ENCODE measurements at regions of chr6 and their contacts with region 1.

Region 1: GRCh38 chr6:7561153-7561964 is 19.9 kb downstream of the DSP start:
- DNase-seq: peak; percentile 95 to 97
- H3K4me3 ChIP-seq: no peak overlapping the region
- H3K4me3 Mint-ChIP-seq: peak overlapping the region; percentile 68
- H3K27ac Mint-ChIP-seq: peak overlapping the region; percentile 94
- H3K4me1 ChIP-seq: peaks cover 40% of the 10 kb centered on the region
- H3K4me1 Mint-ChIP-seq: peaks cover 30% of the 10 kb centered on the region
- H3K27me3 ChIP-seq: no peaks in the 10 kb centered on the region
- H3K27me3 Mint-ChIP-seq: no peaks in the 10 kb centered on the region
- CTCF ChIP-seq: no peak

Region 2: DNA sequence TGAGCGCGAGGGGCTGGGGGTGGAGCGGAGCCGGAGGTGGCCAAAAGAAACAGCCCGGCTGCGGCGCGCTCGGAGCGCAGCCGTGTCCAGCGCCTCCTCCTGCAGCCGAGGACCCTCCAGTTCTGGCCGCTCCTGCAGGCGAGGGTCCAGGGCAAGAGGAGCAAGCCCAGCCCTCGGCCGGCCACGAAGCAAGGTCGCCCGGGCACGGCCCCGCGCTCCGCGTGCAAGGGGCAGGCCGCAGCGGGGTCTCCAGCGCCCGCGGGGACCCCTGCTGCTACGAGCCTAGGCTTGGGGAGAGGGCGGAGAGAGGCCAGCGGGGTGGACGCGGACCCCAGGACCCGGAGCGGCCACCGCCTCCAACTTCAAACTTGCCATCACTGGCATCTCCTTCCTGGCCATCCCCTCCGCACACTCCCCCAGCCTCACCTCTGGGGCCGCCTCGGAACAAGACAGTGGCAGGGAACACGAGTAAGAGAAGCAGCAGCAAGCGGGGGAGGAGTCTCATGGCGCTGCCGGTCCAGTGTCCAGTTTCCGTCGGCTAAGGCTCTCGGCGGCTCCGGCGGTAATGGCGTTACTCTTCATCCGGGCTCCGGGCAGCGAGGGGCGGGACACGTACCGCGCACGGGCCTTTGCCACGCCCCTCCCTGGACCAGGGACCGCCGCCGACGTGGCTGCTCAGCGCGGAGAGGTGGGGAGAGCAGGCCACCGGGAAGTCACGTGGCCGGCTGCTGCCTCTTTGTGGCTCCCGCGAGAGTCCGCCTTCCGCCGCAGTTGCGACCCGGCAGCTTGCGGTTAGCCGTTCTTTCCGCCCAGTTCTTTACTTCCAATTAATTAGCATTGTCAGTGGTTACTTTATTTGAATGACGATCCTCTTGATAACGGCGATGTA is 248.5 kb before region 1 on chr6 and contains the start of gene SSR1:
- CTCF ChIA-PET with region 1: no interaction called
- POLR2A ChIA-PET with region 1: no interaction called
- intact Hi-C with region 1: loop called (anchors 1 kb)
- DNase-seq: peak; percentile 96 to 97
- H3K4me3 ChIP-seq: peak within 1 kb of the TSS; percentile 95
- H3K4me3 Mint-ChIP-seq: peak within 1 kb of the TSS; percentile 87
- H3K27ac Mint-ChIP-seq: peak within 1 kb of the TSS; percentile 76
- H3K4me1 ChIP-seq: peaks cover 16% of the 10 kb centered on the region
- H3K4me1 Mint-ChIP-seq: no peaks in the 10 kb centered on the region
- H3K27me3 ChIP-seq: no peaks in the 10 kb centered on the region
- H3K27me3 Mint-ChIP-seq: no peaks in the 10 kb centered on the region
- CTCF ChIP-seq: no peak
- total RNA-seq, gene SSR1: 136 and 150 TPM in 2 replicates

Region 3: DNA sequence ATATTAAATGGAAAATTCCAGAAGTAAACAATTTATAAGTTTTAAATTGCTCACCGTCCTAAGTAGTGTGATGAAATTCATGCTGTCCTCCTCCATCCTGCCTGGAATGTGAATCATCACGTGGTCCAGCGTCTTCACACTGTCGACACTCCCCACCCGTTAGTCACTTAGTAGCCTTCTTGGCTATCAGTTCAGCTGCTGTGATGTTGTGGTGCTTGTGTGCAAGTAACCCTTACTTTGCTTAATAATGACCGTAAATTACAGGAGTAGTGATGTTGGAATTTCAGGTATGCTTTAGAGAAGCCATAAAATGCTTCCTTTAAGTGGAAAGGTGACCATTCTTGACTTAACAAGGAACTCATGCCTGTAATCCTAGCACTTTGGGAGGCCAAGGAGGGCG is 146.5 kb before region 1 on chr6:
- CTCF ChIA-PET with region 1: no interaction called
- POLR2A ChIA-PET with region 1: no interaction called
- intact Hi-C with region 1: loop called (anchors 1 kb)
- DNase-seq: peak; percentile 86 to 92
- H3K4me3 ChIP-seq: no peak overlapping the region
- H3K4me3 Mint-ChIP-seq: peak overlapping the region; percentile 60
- H3K27ac Mint-ChIP-seq: peak overlapping the region; percentile 90
- H3K4me1 ChIP-seq: peaks cover 58% of the 10 kb centered on the region
- H3K4me1 Mint-ChIP-seq: peaks cover 62% of the 10 kb centered on the region
- H3K27me3 ChIP-seq: no peaks in the 10 kb centered on the region
- H3K27me3 Mint-ChIP-seq: no peaks in the 10 kb centered on the region
- CTCF ChIP-seq: no peak

Region 4: DNA sequence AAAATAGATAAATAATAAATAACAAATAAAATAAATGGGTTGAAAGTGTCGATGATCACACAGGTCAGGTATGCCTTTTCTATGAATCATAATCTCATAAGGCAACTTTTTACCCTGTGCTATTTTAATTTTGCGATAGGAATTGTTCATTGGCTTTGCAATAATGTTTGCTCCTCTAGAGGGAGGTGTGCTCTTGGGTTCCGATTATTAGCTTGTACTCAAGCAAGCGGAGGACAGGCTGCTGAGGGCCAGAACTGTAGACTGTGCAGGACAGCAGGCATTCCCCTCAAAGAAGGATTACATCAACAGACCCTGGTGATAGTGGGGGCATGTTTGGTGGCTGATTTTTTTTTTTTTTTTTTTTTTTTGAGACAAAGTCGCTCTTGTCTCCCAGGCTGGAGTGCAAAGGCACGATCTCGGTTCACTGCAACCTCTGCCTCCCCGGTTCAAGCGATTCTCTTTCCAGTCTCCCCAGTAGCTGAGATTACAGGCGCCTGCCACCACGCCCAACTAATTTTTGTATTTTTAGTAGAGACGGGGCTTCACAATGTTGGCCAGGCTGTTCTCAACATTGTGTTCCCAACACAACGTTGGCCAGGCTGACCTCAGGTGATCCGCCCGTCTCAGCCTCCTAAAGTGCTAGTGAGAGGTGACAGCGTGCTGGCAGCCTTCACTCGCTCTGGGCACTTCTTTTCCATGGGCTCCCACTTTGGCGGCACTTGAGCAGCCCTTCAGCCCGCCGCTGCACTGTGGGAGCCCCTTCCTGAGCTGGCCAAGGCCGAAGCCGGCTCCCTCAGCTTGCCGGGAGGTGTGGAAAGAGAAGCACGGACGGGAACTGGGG is 136.2 kb before region 1 on chr6:
- CTCF ChIA-PET with region 1: interaction called, 6 read pairs
- POLR2A ChIA-PET with region 1: no interaction called
- intact Hi-C with region 1: loop called (anchors 1 kb)
- DNase-seq: peak; percentile 49 to 57
- H3K4me3 ChIP-seq: no peak overlapping the region
- H3K4me3 Mint-ChIP-seq: no peak overlapping the region
- H3K27ac Mint-ChIP-seq: no peak overlapping the region
- H3K4me1 ChIP-seq: peaks cover 8% of the 10 kb centered on the region
- H3K4me1 Mint-ChIP-seq: peaks cover 5% of the 10 kb centered on the region
- H3K27me3 ChIP-seq: no peaks in the 10 kb centered on the region
- H3K27me3 Mint-ChIP-seq: no peaks in the 10 kb centered on the region
- CTCF ChIP-seq: peak; percentile 37 to 54

Region 5: GRCh38 chr6:7463785-7464184 is 97.6 kb before region 1 on chr6:
- CTCF ChIA-PET with region 1: no interaction called
- POLR2A ChIA-PET with region 1: interaction called, 6 read pairs
- intact Hi-C with region 1: loop called (anchors 1 kb)
- DNase-seq: peak; percentile 88 to 92
- H3K4me3 ChIP-seq: no peak overlapping the region
- H3K4me3 Mint-ChIP-seq: no peak overlapping the region
- H3K27ac Mint-ChIP-seq: peak overlapping the region; percentile 93
- H3K4me1 ChIP-seq: peaks cover 71% of the 10 kb centered on the region
- H3K4me1 Mint-ChIP-seq: peaks cover 48% of the 10 kb centered on the region
- H3K27me3 ChIP-seq: no peaks in the 10 kb centered on the region
- H3K27me3 Mint-ChIP-seq: no peaks in the 10 kb centered on the region
- CTCF ChIP-seq: no peak

Region 6: DNA sequence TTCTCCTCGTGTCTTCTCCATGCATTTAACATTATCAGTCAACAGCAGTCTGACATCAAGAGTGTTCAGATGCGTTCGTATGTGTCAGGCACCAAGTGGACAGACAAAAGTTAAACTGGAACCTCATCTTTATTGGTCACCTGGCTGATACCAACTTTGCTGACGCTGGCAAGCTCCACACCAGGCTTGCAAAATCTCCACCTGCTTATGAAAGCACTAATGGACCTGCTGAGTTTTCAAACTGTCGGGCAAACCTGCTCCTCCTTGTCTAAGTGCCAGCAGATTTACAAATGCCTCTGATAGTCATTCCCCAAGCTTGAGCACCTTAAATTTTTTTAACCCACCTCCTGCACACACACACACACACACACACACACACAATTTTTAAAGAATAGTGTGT is 47.8 kb before region 1 on chr6:
- CTCF ChIA-PET with region 1: no interaction called
- POLR2A ChIA-PET with region 1: no interaction called
- intact Hi-C with region 1: no loop called
- DNase-seq: no peak
- H3K4me3 ChIP-seq: no peak overlapping the region
- H3K4me3 Mint-ChIP-seq: no peak overlapping the region
- H3K27ac Mint-ChIP-seq: no peak overlapping the region
- H3K4me1 ChIP-seq: no peaks in the 10 kb centered on the region; the same call in 1 of the 2 replicates
- H3K4me1 Mint-ChIP-seq: peaks cover 6% of the 10 kb centered on the region
- H3K27me3 ChIP-seq: no peaks in the 10 kb centered on the region
- H3K27me3 Mint-ChIP-seq: no peaks in the 10 kb centered on the region
- CTCF ChIP-seq: no peak

Region 7: GRCh38 chr6:7572213-7572958 is 11.0 kb after region 1 on chr6:
- CTCF ChIA-PET with region 1: no interaction called
- POLR2A ChIA-PET with region 1: no interaction called
- intact Hi-C with region 1: no loop called
- DNase-seq: no peak
- H3K4me3 ChIP-seq: no peak overlapping the region
- H3K4me3 Mint-ChIP-seq: no peak overlapping the region
- H3K27ac Mint-ChIP-seq: no peak overlapping the region
- H3K4me1 ChIP-seq: no peaks in the 10 kb centered on the region
- H3K4me1 Mint-ChIP-seq: no peaks in the 10 kb centered on the region
- H3K27me3 ChIP-seq: no peaks in the 10 kb centered on the region
- H3K27me3 Mint-ChIP-seq: no peaks in the 10 kb centered on the region
- CTCF ChIP-seq: no peak

Region 8: DNA sequence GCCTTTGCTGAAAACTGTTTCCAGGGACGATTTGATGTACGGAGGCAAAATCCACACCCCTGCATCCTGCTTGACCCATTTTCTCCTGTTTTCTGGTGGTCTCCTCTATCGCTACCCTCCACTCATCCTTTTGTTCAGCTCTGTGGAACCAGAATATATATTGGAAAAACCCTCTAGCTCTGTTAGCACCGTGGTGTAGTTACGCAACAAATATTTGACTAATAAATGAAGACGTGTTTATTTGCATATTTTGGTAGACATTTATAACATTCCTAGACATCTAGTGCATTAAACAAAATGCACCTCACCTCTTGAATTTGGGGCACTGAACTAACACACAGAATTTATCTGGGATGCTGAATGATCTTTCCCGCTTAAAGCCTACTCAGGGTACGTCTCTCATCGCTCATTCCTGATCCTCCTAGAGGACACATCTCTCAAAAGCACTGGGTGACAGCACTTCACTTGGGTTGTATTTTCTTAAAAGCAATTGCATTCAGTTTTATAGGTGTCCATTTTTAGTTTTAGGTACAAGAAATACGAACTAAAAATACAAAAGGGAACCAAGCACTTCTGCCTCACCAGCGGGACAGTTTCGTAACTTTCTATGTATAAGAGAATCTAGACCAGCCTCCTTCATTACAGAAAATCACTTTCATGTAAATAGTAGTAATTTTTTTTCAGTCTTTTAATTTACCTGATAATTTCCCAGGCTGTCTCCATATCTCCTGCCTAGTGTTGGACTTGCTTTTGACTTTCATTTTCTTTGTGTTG is 87.9 kb after region 1 on chr6:
- CTCF ChIA-PET with region 1: no interaction called
- POLR2A ChIA-PET with region 1: no interaction called
- intact Hi-C with region 1: no loop called
- DNase-seq: no peak
- H3K4me3 ChIP-seq: no peak overlapping the region
- H3K4me3 Mint-ChIP-seq: no peak overlapping the region
- H3K27ac Mint-ChIP-seq: no peak overlapping the region
- H3K4me1 ChIP-seq: no peaks in the 10 kb centered on the region
- H3K4me1 Mint-ChIP-seq: no peaks in the 10 kb centered on the region
- H3K27me3 ChIP-seq: no peaks in the 10 kb centered on the region
- H3K27me3 Mint-ChIP-seq: no peaks in the 10 kb centered on the region
- CTCF ChIP-seq: no peak

Region 9: DNA sequence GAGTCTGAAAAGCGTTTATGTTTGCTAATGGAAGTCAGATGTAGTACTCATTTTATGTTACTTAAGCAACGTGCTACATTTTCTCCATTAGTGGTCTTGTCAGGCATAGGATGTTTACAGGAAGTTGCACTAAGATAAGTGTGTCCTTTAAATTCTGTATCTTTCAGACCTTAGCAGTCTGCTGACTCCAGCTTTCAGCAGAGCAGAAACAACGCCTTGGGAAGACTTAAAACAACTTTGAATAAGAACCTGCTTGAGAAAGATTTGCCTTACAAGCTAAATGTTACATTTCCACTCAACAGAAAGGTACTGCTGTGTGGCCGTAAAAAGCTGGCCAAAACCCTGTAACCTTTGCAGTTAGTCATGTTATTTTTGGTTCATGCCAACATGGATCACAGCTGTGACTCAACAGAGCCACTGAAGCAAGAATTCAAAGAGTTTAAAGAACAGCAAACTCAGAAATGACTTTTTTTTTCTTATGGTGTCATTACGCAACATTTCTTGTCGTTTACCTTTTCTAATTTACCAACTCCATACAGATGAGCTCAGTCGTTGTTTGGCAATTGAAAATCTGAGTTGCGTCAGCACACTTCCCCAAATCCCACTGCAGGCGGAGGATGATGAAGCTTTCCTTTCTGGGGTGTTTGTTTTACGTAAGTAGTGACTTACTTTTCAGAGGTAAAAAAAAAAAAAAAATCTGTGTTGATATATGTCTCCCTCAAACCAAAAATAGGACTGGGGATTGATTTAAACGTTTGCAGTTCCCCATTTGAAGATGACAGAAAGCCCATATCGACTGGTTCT is 136.7 kb after region 1 on chr6:
- CTCF ChIA-PET with region 1: no interaction called
- POLR2A ChIA-PET with region 1: no interaction called
- intact Hi-C with region 1: no loop called
- DNase-seq: peak in 1 of 2 experiments; percentile 37
- H3K4me3 ChIP-seq: no peak overlapping the region
- H3K4me3 Mint-ChIP-seq: no peak overlapping the region
- H3K27ac Mint-ChIP-seq: no peak overlapping the region
- H3K4me1 ChIP-seq: peaks cover 21% of the 10 kb centered on the region
- H3K4me1 Mint-ChIP-seq: no peaks in the 10 kb centered on the region
- H3K27me3 ChIP-seq: no peaks in the 10 kb centered on the region
- H3K27me3 Mint-ChIP-seq: no peaks in the 10 kb centered on the region
- CTCF ChIP-seq: no peak